Endothelial cell of umbilical vein (primary cell): ENCODE measurements at regions of chr22 and their contacts with region 1.

Region 1: GRCh38 chr22:44020981-44021380 is 3.1 kb upstream of the PARVB start:
- DNase-seq: peak; percentile 54
- H3K4me3 ChIP-seq: no peak overlapping the region
- H3K27ac ChIP-seq: peak overlapping the region; percentile 96
- H3K4me1 ChIP-seq: peaks cover 42% of the 10 kb centered on the region
- H3K27me3 ChIP-seq: no peaks in the 10 kb centered on the region
- CTCF ChIP-seq: no peak
- POLR2A ChIP-seq: no peak

Region 2: DNA sequence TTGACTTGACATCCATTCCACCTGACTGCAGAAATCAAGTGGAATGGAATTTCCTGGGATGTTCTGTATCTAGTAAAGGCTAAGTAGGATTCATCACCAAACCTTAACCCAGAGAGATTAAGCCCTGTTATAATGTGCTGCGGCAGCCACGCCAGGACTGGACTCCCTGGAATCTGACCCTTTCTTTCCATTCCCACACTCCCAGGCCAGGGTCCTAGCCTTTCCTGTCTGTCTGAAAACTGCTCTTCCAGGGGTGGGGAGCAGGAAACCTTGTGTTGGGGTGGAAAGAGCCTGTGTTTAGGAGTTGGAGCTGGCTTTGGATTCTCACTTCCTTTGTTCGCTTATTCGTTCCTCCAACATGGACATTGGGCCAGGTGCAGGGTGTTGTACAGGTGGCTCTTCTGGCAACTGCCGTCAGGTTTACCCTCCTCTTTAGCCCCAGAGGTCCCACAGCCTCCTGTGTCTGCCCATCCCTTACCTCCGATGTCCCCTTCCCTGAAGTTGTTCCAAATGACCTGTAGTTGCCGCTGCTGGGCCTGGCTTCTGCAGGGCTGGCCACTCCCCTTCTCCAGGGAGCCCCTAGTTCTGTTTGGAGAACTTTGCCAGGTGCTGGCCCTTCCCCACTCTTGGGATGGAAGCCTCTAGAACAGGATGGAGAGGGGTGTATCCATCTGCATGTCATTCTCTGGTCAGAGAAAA is 17.4 kb before region 1 on chr22:
- CTCF ChIA-PET with region 1: interaction called, 10 read pairs
- POLR2A ChIA-PET with region 1: interaction called, 3 read pairs
- dilution Hi-C with region 1: no loop called
- intact Hi-C with region 1: loop called (anchors 2 kb)
- DNase-seq: peak; percentile 60
- H3K4me3 ChIP-seq: no peak overlapping the region
- H3K27ac ChIP-seq: no peak overlapping the region
- H3K4me1 ChIP-seq: peaks cover 14% of the 10 kb centered on the region
- H3K27me3 ChIP-seq: no peaks in the 10 kb centered on the region
- CTCF ChIP-seq: peak; percentile 37 to 64
- POLR2A ChIP-seq: no peak